ENCODE measurements at regions of chr5 and their contacts with region 1.

Region 1: GRCh38 chr5:25649628-25650265 is 1005.0 kb upstream of the CDH10 start:
- DNase-seq: no peak
- H3K4me3 ChIP-seq: no peak overlapping the region
- H3K27ac ChIP-seq: no peak overlapping the region
- H3K4me1 ChIP-seq: no peaks in the 10 kb centered on the region
- H3K27me3 ChIP-seq: no peaks in the 10 kb centered on the region
- CTCF ChIP-seq: no peak
- POLR2A ChIP-seq: no peak

Region 2: DNA sequence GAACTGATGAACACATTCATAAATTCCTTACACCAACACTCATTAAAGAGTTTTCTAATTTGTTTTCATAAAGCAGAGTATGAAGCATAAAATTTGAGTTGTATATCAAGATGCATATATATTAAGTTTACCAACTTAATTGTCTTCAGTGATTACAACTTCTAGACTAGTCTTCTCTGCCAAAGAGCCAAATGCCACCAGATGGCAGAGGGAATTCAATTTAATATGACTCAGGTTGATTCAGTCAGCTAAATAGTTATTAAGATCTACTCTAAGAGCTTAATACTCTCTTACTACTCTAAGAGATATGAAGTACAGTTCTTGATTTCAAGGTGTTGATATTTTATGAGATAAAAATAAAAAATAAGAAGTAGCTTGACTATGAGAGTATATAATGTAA is 1058.3 kb before region 1 on chr5:
- intact Hi-C with region 1: loop called (anchors 5 kb)
- DNase-seq: no peak
- H3K4me3 ChIP-seq: no peak overlapping the region
- H3K27ac ChIP-seq: no peak overlapping the region
- H3K4me1 ChIP-seq: no peaks in the 10 kb centered on the region
- H3K27me3 ChIP-seq: no peaks in the 10 kb centered on the region
- CTCF ChIP-seq: no peak
- POLR2A ChIP-seq: no peak

Region 3: GRCh38 chr5:24720743-24721142 is 929.0 kb before region 1 on chr5:
- intact Hi-C with region 1: no loop called
- DNase-seq: no peak
- H3K4me3 ChIP-seq: no peak overlapping the region
- H3K27ac ChIP-seq: no peak overlapping the region
- H3K4me1 ChIP-seq: no peaks in the 10 kb centered on the region
- H3K27me3 ChIP-seq: no peaks in the 10 kb centered on the region
- CTCF ChIP-seq: no peak
- POLR2A ChIP-seq: no peak

Region 4: DNA sequence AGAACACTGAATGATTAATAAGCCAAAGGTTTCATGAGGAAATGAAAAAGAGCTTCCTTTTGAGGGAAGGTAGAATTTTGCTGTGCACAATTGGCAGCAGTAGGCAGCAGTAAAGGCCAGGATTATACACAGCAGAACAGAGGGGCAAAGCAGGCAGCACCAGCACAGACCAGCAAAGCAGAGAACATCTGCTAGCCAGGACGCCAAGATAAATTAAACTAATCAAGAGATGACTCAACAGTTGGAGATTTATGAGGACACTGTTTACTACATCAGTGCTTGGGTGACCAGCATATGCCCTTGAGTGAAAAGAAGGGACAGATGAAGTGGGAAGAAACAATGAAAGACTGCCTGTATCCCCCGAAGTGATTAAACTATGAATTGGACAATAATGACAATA is 133.6 kb before region 1 on chr5:
- intact Hi-C with region 1: no loop called
- DNase-seq: no peak
- H3K4me3 ChIP-seq: no peak overlapping the region
- H3K27ac ChIP-seq: no peak overlapping the region
- H3K4me1 ChIP-seq: no peaks in the 10 kb centered on the region
- H3K27me3 ChIP-seq: no peaks in the 10 kb centered on the region
- CTCF ChIP-seq: no peak
- POLR2A ChIP-seq: no peak

Measured in vagina (tissue), 2 donors.